Spleen (tissue), 13 donors: ENCODE measurements at regions of chr2 and their contacts with region 1.

Region 1: GRCh38 chr2:195656859-195657633 is at the start of gene SLC39A10:
- DNase-seq: peak; percentile 100
- H3K4me3 ChIP-seq: peak within 1 kb of the TSS; percentile 56 to 91 (median 74)
- H3K27ac ChIP-seq: peak within 1 kb of the TSS; percentile 99 to 100 (median 100)
- H3K4me1 ChIP-seq: peaks cover 15 to 55% (median 45%) of the 10 kb centered on the region in 6 donors
- H3K27me3 ChIP-seq: no peaks in the 10 kb centered on the region
- CTCF ChIP-seq: peak in 5 of 11 experiments; percentile 19 to 53 (median 39)
- POLR2A ChIP-seq: peak; percentile 90 to 97 (median 97)
- total RNA-seq, gene SLC39A10: 47.7 to 78.1 (median 60.7) TPM

Region 2: DNA sequence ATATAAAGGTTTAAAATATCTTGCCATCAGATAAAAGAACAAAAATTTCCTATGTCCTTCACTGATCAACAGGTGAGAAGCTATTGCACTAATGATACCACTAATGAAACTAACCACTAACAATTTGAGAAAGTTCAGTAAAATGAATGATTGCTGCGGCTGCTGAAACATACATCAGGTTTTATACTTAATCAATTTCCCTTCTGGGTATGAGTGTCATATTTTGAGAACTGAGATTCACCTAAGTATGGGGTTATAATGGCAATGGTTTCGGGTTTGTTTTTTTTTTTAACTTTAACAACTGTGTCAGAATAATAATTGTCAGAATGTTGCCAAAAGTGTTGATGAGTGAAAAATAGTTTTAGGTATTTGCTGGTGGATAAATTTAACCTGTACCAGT is 151.3 kb before region 1 on chr2:
- intact Hi-C with region 1: loop called (anchors 10 kb)
- DNase-seq: no peak
- H3K4me3 ChIP-seq: no peak overlapping the region
- H3K27ac ChIP-seq: no peak overlapping the region
- H3K4me1 ChIP-seq: no peaks in the 10 kb centered on the region
- H3K27me3 ChIP-seq: no peaks in the 10 kb centered on the region
- CTCF ChIP-seq: no peak
- POLR2A ChIP-seq: no peak

Region 3: DNA sequence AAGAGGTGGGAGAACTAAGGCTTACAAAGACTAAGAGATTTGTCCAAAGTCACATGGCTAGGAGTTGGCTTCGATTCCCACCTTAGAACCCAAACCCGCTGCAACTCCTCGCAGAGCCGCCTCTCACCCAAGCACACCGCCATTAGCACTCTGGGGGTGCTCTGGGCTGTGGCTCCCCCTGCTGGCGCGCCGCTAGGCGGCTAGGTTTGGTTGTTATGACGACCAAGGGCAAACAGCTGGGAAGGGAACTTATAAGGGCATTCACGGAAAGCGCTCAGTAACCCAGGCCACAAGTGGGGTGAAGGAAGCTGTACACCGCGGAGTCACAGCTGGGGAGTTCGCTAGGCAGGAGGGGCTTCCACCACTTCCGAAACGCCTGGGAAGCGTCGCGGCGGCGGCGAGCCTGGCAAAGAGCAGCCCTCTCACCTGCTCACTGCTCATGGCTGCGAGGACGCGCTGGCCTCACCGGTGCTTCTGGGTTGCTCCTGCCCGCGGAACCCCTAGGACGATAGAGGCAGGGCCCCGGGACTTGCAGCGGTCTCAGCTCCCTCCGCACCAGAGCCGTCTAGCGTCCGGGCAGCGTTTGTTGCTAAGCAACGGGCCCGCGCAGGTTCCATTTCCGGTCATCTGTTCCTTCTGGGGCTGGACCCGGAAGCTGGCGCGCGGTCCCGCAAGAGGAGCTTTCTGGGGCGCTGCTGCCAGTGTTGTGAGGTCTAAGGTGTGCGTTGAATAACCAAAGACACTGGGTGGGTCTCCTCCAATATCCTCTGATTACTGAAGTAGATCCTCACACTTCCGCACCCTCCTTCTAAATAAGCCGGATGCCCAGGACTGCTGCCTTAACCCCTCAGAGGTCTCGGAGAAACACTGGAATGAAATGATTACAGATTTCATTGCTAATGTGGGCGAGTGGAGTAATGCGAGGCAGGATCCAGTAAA is 411.5 kb after region 1 on chr2 and contains the start of gene DNAH7:
- intact Hi-C with region 1: loop called (anchors 10 kb)
- DNase-seq: peak; percentile 97
- H3K4me3 ChIP-seq: peak within 1 kb of the TSS; percentile 53 to 93 (median 85)
- H3K27ac ChIP-seq: peak within 1 kb of the TSS in 7 of 8 donors; percentile 15 to 84 (median 72)
- H3K4me1 ChIP-seq: peaks cover 6 to 27% (median 19%) of the 10 kb centered on the region in 6 donors
- H3K27me3 ChIP-seq: no peaks in the 10 kb centered on the region
- CTCF ChIP-seq: peak; percentile 58 to 91 (median 81)
- POLR2A ChIP-seq: no peak
- total RNA-seq, gene DNAH7: 0.24 to 1.9 (median 0.33) TPM